Sciatic nerve (tissue), 2 donors: ENCODE measurements at regions of chr17 and their contacts with region 1.

Region 1: DNA sequence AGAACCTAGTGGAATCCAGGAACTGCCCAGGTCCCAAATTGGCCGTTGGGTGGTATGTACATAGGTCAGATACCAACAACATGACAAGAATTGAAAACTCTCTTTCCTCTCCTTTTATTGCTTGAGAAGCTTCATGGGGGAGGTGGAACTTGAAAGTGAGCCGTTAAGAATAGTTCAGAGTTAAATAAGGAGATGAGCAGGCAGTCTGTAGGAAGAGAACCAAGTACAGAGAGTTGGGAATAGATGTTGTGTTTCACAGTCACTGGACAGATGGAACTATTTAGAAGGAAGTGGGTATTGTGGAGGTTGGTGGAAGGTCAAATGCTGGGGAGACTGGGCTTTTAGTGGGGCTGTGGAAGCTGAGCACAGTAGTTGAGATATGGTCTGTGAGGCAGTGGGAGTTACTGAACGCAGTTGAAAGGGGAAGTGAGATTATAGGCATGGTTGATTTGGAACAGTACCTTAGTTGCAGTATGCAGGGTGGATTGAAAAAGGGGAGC is 26.4 kb downstream of the ARHGAP44 start:
- DNase-seq: no peak
- ATAC-seq: no peak

Region 2: DNA sequence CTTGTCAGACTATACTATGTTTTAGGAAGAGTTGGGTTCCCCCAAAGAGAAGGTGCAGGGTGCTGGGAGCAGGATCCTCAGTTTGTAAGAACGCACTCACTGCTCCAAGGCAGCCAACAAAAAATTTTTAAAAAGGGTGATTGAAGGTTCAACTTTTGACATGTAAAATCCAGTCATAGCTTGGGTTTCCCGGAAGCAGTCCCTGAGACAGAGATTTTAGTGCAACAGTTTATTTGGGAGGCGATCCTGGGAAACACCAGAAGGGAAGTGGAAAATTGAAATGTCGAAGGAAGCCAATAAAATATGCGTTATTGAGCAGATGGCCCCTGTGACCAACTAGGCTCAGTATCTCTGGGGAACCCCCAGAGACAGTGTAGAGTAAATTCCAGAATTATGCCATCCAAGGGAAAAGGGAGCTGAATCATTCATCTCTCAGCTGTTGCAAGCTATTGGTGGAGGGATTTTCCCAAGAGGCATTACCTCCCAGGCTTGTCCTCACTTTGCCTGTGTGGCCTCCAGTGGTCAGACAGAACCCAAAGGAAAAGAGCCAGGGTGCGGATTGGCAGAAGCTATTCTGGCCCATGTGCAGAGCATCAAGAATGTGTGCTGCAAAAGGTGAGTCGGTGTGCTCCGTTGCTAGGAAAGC is 1558.0 kb after region 1 on chr17:
- intact Hi-C with region 1: loop called (anchors 5 kb)
- DNase-seq: no peak
- ATAC-seq: no peak